Activated T-helper 2 cell treated with anti-CD3 and anti-CD28 coated beads, Interferon-gamma antibody, Interleukin-2, Interleukin-4, amounts not matched to agents 10 μg/mL and 5 μg/mL and 100 μg/mL, durations not matched to agents 14 hours and 24 hours and 36 hours (primary cell): ENCODE measurements at regions of chr15 and their contacts with region 1.

Region 1: GRCh38 chr15:50247819-50248655 is 17.5 kb downstream of the HDC start:
- DNase-seq: peak; percentile 62
- H3K4me3 Mint-ChIP-seq: peak overlapping the region; percentile 82
- H3K27ac Mint-ChIP-seq: peak overlapping the region; percentile 99
- H3K4me1 Mint-ChIP-seq: peaks cover 68% of the 10 kb centered on the region
- H3K27me3 Mint-ChIP-seq: no peaks in the 10 kb centered on the region

Region 2: DNA sequence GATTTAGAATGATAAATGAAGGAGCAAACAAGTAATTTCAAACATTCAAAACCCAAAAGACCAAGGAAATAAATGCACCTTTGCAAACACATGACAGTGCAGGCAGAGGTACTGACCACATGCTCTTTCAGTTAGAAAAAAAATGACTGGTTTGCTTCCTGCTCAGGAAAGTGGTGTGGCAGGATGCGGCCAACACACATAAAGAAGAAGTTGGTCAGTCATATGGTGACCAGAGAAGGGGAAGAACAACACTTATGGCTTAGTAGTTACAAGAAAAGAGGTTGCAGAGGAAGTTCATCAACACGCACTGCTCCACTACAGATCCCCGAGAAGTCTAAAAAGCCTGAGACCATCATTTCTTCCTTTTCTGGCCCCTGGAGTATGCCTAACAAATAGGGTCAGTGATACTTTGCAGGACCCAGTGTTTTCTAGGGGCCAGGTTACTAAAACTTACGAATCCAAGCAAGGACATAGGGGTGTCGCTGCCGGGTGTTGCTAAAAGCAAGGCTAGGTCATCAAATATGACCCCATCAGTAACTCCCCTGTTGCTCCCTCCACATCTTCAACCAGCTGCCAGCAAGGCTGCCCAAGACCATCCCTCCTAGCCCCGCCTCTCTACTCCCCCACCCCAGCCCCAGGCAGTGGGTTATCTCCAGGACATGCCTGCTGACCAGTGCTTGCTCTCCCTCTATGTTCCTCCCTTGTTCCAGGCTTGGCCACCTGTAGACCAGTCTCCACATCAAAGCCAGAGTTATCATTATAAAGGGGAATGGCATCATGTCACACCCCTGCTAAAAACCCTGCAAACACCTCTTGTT is 140.2 kb before region 1 on chr15:
- intact Hi-C with region 1: loop called (anchors 5 kb)
- DNase-seq: peak; percentile 29
- H3K4me3 Mint-ChIP-seq: peak overlapping the region; percentile 61
- H3K27ac Mint-ChIP-seq: peak overlapping the region; percentile 94
- H3K4me1 Mint-ChIP-seq: peaks cover 83% of the 10 kb centered on the region
- H3K27me3 Mint-ChIP-seq: no peaks in the 10 kb centered on the region

Region 3: DNA sequence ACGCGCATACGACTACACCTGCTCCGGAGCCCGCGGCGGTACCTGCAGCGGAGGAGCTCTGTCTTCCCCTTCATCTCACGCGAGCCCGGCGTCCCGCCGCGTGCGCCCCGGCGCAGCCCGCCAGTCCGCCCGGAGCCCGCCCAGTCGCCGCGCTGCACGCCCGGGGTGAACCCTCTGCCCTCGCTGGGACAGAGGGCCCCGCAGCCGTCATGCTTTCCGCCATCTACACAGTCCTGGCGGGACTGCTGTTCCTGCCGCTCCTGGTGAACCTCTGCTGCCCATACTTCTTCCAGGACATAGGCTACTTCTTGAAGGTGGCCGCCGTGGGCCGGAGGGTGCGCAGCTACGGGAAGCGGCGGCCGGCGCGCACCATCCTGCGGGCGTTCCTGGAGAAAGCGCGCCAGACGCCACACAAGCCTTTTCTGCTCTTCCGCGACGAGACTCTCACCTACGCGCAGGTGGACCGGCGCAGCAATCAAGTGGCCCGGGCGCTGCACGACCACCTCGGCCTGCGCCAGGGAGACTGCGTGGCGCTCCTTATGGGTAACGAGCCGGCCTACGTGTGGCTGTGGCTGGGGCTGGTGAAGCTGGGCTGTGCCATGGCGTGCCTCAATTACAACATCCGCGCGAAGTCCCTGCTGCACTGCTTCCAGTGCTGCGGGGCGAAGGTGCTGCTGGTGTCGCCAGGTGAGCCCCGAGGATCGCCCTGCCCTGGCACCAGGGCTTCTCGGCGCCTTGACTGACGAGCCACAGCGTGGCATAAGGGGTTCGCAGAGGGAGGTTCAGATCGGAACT is 65.6 kb before region 1 on chr15:
- intact Hi-C with region 1: loop called (anchors 2 kb)
- DNase-seq: peak; percentile 53
- H3K4me3 Mint-ChIP-seq: peak overlapping the region; percentile 98
- H3K27ac Mint-ChIP-seq: peak overlapping the region; percentile 96
- H3K4me1 Mint-ChIP-seq: peaks cover 44% of the 10 kb centered on the region
- H3K27me3 Mint-ChIP-seq: no peaks in the 10 kb centered on the region

Region 4: GRCh38 chr15:50210291-50211062 is 37.6 kb before region 1 on chr15:
- intact Hi-C with region 1: no loop called
- DNase-seq: no peak
- H3K4me3 Mint-ChIP-seq: no peak overlapping the region
- H3K27ac Mint-ChIP-seq: no peak overlapping the region
- H3K4me1 Mint-ChIP-seq: peaks cover 1% of the 10 kb centered on the region
- H3K27me3 Mint-ChIP-seq: no peaks in the 10 kb centered on the region

Region 5: DNA sequence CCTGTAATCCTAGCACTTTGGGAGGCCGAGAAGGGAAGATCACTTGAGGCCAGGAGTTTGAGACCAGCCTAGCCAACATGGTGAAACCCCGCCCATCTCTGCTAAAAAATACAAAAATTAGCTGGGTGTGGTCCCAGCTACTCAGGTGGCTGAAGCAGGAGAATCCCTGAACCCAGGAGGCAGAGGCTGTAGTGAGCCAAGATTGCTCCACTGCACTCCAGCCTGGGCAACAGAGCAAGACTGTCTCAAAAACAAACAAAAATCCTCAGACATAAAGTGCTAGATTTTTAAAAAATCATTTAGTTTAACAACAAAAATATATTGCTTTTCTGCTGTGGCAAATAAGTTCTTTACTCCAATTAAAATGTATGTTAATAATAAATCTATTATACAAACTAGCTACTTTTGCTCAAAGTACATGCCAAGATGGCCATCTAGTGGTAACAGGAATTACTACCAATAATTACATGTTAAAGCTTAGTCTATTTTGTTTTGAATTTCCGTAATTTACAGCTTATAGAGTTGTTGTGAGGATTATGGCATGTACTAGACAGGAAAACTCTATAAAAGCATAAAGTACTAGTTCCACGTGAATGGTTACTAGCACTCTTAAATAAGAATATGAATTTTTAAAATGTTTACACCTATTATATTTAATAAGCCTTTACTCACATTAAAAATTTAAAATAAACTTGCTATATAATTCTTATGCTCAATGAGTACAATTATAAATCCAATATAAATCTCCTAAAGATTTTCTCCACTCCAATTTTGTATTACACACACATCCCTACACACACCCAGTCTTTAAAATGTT is 68.0 kb after region 1 on chr15:
- intact Hi-C with region 1: loop called (anchors 5 kb)
- DNase-seq: no peak
- H3K4me3 Mint-ChIP-seq: no peak overlapping the region
- H3K27ac Mint-ChIP-seq: no peak overlapping the region
- H3K4me1 Mint-ChIP-seq: peaks cover 34% of the 10 kb centered on the region
- H3K27me3 Mint-ChIP-seq: no peaks in the 10 kb centered on the region